ENCODE measurements at regions of chr2 and their contacts with region 1.

Region 1: GRCh38 chr2:200483729-200484198 is 26.1 kb downstream of the KCTD18 start:
- DNase-seq: no peak
- ATAC-seq: no peak
- H3K4me3 ChIP-seq: no peak overlapping the region
- H3K4me3 Mint-ChIP-seq: no peak overlapping the region
- H3K27ac ChIP-seq: no peak overlapping the region
- H3K27ac Mint-ChIP-seq: no peak overlapping the region
- H3K4me1 ChIP-seq: peaks cover 0 to 4% of the 10 kb centered on the region in 2 donors
- H3K4me1 Mint-ChIP-seq: peaks cover 0 to 24% (median 4%) of the 10 kb centered on the region in 7 donors
- H3K27me3 ChIP-seq: no peaks in the 10 kb centered on the region
- H3K27me3 Mint-ChIP-seq: no peaks in the 10 kb centered on the region

Region 2: GRCh38 chr2:199704358-199705238 is 779.2 kb before region 1 on chr2:
- CTCF ChIA-PET with region 1: no interaction called
- POLR2A ChIA-PET with region 1: no interaction called
- intact Hi-C with region 1: loop called in 1 of 2 experiments (anchors 5 kb)
- DNase-seq: peak in 5 of 9 donors; percentile 5 to 27 (median 9)
- ATAC-seq: peak; percentile 74
- H3K4me3 ChIP-seq: no peak overlapping the region
- H3K4me3 Mint-ChIP-seq: no peak overlapping the region
- H3K27ac ChIP-seq: no peak overlapping the region
- H3K27ac Mint-ChIP-seq: no peak overlapping the region
- H3K4me1 ChIP-seq: no peaks in the 10 kb centered on the region
- H3K4me1 Mint-ChIP-seq: peaks cover 0 to 5% (median 0%) of the 10 kb centered on the region in 7 donors
- H3K27me3 ChIP-seq: no peaks in the 10 kb centered on the region
- H3K27me3 Mint-ChIP-seq: peaks cover 0 to 7% (median 5%) of the 10 kb centered on the region in 5 donors

Region 3: GRCh38 chr2:199979832-199980628 is 503.7 kb before region 1 on chr2:
- CTCF ChIA-PET with region 1: interaction called, 37 read pairs
- POLR2A ChIA-PET with region 1: interaction called, 3 read pairs
- intact Hi-C with region 1: loop called (anchors 1 kb)
- DNase-seq: peak; percentile 42 to 79 (median 71)
- ATAC-seq: peak; percentile 85
- H3K4me3 ChIP-seq: no peak overlapping the region
- H3K4me3 Mint-ChIP-seq: peak overlapping the region in 1 of 10 donors; percentile 39
- H3K27ac ChIP-seq: no peak overlapping the region
- H3K27ac Mint-ChIP-seq: no peak overlapping the region
- H3K4me1 ChIP-seq: no peaks in the 10 kb centered on the region
- H3K4me1 Mint-ChIP-seq: peaks cover 0 to 22% (median 0%) of the 10 kb centered on the region in 7 donors
- H3K27me3 ChIP-seq: no peaks in the 10 kb centered on the region
- H3K27me3 Mint-ChIP-seq: peaks cover 0 to 2% (median 0%) of the 10 kb centered on the region in 5 donors

Region 4: GRCh38 chr2:200443916-200444315 is 39.8 kb before region 1 on chr2:
- CTCF ChIA-PET with region 1: interaction called, 3 read pairs
- POLR2A ChIA-PET with region 1: no interaction called
- intact Hi-C with region 1: loop called in 1 of 2 experiments (anchors 2 kb)
- DNase-seq: no peak
- ATAC-seq: no peak
- H3K4me3 ChIP-seq: no peak overlapping the region
- H3K4me3 Mint-ChIP-seq: no peak overlapping the region
- H3K27ac ChIP-seq: no peak overlapping the region
- H3K27ac Mint-ChIP-seq: no peak overlapping the region
- H3K4me1 ChIP-seq: no peaks in the 10 kb centered on the region
- H3K4me1 Mint-ChIP-seq: peaks cover 0 to 26% (median 1%) of the 10 kb centered on the region in 7 donors
- H3K27me3 ChIP-seq: no peaks in the 10 kb centered on the region
- H3K27me3 Mint-ChIP-seq: no peaks in the 10 kb centered on the region

Region 5: DNA sequence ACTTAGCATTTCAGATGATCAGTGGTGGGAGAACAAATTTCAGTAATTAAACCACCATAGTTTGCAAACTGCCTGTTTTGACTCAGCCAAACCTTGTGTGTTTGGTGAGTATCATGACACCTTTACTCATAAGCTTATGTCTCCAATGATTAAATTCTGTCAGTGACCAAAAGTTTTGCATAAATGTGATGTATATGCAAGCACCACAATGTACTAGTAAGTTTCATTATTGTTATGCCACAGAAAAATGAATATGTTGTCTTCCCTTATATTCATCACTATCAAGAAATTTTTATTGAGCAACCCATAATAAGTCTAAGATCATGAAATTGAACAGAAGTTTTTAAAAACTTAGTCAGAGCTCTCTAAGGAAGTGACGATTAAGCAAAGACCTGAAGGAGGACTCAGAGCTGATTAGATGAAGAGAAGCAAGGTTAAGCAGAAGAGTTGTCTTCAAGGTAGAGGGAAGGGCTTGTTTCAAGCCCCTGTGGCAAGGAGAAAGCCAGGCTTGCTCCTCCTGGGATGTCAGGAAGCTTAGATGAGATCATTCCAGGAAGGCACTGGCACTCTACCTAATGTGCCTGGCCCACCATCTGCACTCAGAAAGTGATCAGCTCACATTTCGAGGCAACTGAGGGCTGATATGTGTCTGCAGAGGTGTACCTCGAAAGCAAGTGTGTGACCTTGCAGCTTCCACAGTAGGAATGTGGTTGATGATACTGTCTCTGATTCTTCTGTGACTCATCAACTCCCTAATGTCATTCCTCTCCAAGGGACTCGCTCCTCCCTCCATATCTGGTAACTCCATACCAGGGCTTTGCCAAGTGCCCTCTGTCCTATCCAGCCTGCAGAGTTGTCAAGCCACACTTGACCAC is 28.6 kb before region 1 on chr2:
- CTCF ChIA-PET with region 1: no interaction called
- POLR2A ChIA-PET with region 1: no interaction called
- intact Hi-C with region 1: no loop called
- DNase-seq: no peak
- ATAC-seq: no peak
- H3K4me3 ChIP-seq: no peak overlapping the region
- H3K4me3 Mint-ChIP-seq: no peak overlapping the region
- H3K27ac ChIP-seq: no peak overlapping the region
- H3K27ac Mint-ChIP-seq: peak overlapping the region in 1 of 9 donors; percentile 23
- H3K4me1 ChIP-seq: peaks cover 0 to 7% of the 10 kb centered on the region in 2 donors
- H3K4me1 Mint-ChIP-seq: peaks cover 5 to 22% (median 9%) of the 10 kb centered on the region in 7 donors
- H3K27me3 ChIP-seq: no peaks in the 10 kb centered on the region
- H3K27me3 Mint-ChIP-seq: peaks cover 0 to 4% (median 0%) of the 10 kb centered on the region in 5 donors

Region 6: GRCh38 chr2:200640901-200641300 is 157.1 kb after region 1 on chr2:
- CTCF ChIA-PET with region 1: no interaction called
- POLR2A ChIA-PET with region 1: no interaction called
- intact Hi-C with region 1: no loop called
- DNase-seq: no peak
- ATAC-seq: no peak
- H3K4me3 ChIP-seq: no peak overlapping the region
- H3K4me3 Mint-ChIP-seq: no peak overlapping the region
- H3K27ac ChIP-seq: no peak overlapping the region
- H3K27ac Mint-ChIP-seq: no peak overlapping the region
- H3K4me1 ChIP-seq: no peaks in the 10 kb centered on the region
- H3K4me1 Mint-ChIP-seq: no peaks in the 10 kb centered on the region
- H3K27me3 ChIP-seq: no peaks in the 10 kb centered on the region
- H3K27me3 Mint-ChIP-seq: peaks cover under 1 to 12% (median 9%) of the 10 kb centered on the region in 5 donors

Region 7: GRCh38 chr2:200703127-200703925 is 219.6 kb after region 1 on chr2:
- CTCF ChIA-PET with region 1: no interaction called
- POLR2A ChIA-PET with region 1: no interaction called
- intact Hi-C with region 1: loop called in 1 of 2 experiments (anchors 5 kb)
- DNase-seq: peak in 4 of 9 donors; percentile 9 to 35 (median 28)
- ATAC-seq: peak; percentile 6
- H3K4me3 ChIP-seq: no peak overlapping the region
- H3K4me3 Mint-ChIP-seq: peak overlapping the region in 1 of 10 donors; percentile 22
- H3K27ac ChIP-seq: no peak overlapping the region
- H3K27ac Mint-ChIP-seq: peak overlapping the region in 3 of 9 donors; percentile 5 to 68 (median 8)
- H3K4me1 ChIP-seq: no peaks in the 10 kb centered on the region
- H3K4me1 Mint-ChIP-seq: peaks cover 0 to 28% (median 4%) of the 10 kb centered on the region in 7 donors
- H3K27me3 ChIP-seq: no peaks in the 10 kb centered on the region
- H3K27me3 Mint-ChIP-seq: peaks cover 0 to 5% (median 2%) of the 10 kb centered on the region in 5 donors

Region 8: DNA sequence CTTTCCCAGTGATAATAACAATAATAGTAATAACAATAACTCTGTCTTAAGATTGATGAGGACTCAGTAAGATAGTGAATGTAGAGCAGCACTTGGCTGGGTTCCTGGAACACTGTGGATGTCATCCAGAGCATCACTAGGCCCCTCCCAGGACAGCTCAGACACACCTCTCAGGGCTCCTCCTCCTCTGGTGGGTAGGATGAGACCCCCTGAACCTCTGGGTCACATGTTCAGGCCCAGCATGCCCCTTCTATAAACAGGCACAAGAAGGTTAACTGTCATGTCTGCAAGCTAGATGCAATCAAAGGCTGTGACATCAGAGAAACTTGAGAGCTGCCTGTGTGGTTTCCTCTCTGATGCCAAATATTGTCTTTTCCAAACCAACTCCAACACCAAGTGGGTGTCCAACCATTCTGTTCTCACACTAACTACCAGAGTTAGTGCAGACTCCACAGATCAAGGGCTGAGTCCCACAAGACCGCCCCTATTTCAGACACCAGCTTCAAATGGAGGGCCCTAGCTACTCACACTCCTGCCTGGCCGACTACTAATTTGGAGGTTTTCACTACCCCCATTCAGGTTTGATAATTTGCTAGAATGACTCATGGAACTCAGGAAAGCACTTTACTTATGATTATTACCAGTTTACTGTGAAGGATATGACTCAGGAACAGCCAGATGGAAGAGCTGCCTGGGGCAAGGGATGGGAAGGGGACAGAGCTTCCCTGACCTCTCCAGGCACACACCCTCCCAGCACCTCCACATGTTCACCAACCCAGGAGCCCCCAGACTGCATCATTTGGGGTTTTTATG is 281.6 kb after region 1 on chr2:
- CTCF ChIA-PET with region 1: no interaction called
- POLR2A ChIA-PET with region 1: no interaction called
- intact Hi-C with region 1: no loop called
- DNase-seq: peak in 1 of 9 donors; percentile 43
- ATAC-seq: peak; percentile 22
- H3K4me3 ChIP-seq: no peak overlapping the region
- H3K4me3 Mint-ChIP-seq: peak overlapping the region in 1 of 10 donors; percentile 38
- H3K27ac ChIP-seq: no peak overlapping the region
- H3K27ac Mint-ChIP-seq: peak overlapping the region in 1 of 9 donors; percentile 40
- H3K4me1 ChIP-seq: no peaks in the 10 kb centered on the region
- H3K4me1 Mint-ChIP-seq: peaks cover 0 to 28% (median 0%) of the 10 kb centered on the region in 7 donors
- H3K27me3 ChIP-seq: no peaks in the 10 kb centered on the region
- H3K27me3 Mint-ChIP-seq: no peaks in the 10 kb centered on the region

Region 9: GRCh38 chr2:200929334-200930249 is 445.8 kb after region 1 on chr2:
- CTCF ChIA-PET with region 1: no interaction called
- POLR2A ChIA-PET with region 1: no interaction called
- intact Hi-C with region 1: no loop called
- DNase-seq: no peak
- ATAC-seq: no peak
- H3K4me3 ChIP-seq: no peak overlapping the region
- H3K4me3 Mint-ChIP-seq: no peak overlapping the region
- H3K27ac ChIP-seq: no peak overlapping the region
- H3K27ac Mint-ChIP-seq: peak overlapping the region in 8 of 9 donors; percentile 0 to 56 (median 29)
- H3K4me1 ChIP-seq: no peaks in the 10 kb centered on the region
- H3K4me1 Mint-ChIP-seq: peaks cover 0 to 7% (median 0%) of the 10 kb centered on the region in 7 donors
- H3K27me3 ChIP-seq: no peaks in the 10 kb centered on the region
- H3K27me3 Mint-ChIP-seq: no peaks in the 10 kb centered on the region

Measured in naive thymus-derived CD4-positive, alpha-beta T cell (primary cell).